CD8-positive, alpha-beta memory T cell (primary cell): ENCODE measurements at regions of chr22 and their contacts with region 1.

Region 1: DNA sequence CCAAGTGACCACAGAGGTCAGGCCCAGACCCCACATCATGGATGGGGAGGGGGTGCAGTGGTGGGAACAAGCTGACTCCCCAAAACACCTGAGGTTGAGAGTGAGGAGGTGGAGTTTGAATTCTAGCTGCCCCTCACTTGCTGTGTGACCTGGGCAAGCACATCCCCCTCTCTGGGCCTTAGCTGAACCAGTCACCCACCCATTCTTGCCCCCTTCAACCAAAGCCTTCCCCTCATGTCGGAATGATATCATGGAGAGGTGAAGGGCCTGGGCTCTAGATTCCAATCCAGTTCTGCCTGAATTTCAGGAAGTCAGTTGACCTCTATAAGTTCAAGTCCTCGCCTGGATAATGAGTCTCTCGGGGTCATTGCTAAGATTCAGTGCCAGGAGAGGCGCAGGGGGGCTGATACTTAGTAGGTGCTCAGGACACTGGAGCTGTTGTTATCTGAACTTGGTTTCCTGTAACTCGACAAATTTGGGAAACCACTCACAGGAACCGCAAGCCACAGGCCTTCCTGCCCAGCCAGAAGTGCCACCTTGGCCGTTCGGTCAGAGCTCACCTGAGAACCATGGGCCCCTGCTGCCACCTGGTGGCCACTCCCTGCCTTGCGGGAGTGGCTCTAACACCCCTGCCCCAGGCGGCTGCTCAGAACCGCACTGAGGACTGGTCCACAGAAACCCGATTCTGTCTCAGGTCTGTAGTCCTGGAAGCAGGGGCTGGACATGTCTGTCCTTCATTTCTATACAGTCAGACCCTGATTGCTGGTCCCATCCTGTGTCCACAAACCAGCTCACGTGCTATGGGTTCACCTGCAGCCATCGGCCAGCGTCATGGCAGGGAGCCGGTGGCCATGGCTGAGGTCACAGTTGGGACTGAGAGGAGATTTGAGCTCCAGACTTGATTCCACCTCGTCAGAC is 6.9 kb downstream of the CDC42EP1 start:
- DNase-seq: peak; percentile 82 to 92 (median 88)
- H3K4me3 ChIP-seq: peak overlapping the region; percentile 28
- H3K4me3 Mint-ChIP-seq: peak overlapping the region; percentile 55 to 88 (median 75)
- H3K27ac ChIP-seq: no peak overlapping the region
- H3K27ac Mint-ChIP-seq: peak overlapping the region in 6 of 8 donors; percentile 37 to 84 (median 78)
- H3K4me1 ChIP-seq: peaks cover 26% of the 10 kb centered on the region
- H3K4me1 Mint-ChIP-seq: peaks cover 19 to 29% (median 20%) of the 10 kb centered on the region in 3 donors
- H3K27me3 ChIP-seq: peaks cover 11% of the 10 kb centered on the region
- H3K27me3 Mint-ChIP-seq: peaks cover 28 to 32% of the 10 kb centered on the region in 2 donors

Region 2: DNA sequence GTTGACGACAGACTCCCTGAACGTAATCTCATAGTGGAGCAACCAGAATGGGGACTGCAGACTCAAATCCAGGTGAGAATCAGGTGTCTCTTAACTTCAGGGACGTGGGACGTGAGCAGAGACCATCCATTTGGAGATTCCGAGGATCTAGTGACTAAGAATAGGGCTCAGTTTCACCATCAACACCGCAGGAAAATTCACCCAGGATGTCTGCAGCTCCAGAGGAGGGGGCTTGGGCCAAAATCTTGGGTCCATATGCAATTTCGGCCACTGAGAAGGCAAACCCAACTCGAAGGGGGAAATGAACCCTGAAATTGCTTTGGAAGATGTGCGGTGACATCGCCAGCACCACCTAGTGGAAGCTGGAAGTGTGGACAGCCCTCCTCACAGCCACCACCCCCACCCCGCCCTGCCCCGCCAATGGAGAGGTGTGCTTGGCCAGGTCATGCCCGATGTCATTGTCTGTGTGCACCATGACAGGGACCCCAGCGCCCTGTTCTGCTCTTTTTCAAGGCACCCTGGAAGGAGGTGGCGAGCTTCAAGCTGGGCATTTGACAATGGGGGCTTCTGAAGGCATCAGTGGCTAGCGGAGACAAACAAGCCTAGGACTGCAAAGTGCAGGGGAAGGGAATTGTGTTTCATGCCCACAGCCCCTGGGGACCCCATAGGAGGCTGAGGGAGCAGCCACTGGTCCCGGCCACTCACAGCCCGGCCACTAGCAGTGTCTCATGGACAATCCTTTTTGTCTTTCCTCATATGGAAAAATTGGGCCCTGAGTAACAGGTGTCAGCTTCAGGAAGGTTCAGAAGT is 1289.5 kb before region 1 on chr22:
- CTCF ChIA-PET with region 1: no interaction called
- POLR2A ChIA-PET with region 1: interaction called, 11 read pairs
- DNase-seq: peak; percentile 45 to 76 (median 56)
- H3K4me3 ChIP-seq: no peak overlapping the region
- H3K4me3 Mint-ChIP-seq: peak overlapping the region in 1 of 7 donors; percentile 20
- H3K27ac ChIP-seq: no peak overlapping the region
- H3K27ac Mint-ChIP-seq: peak overlapping the region; percentile 28 to 91 (median 58)
- H3K4me1 ChIP-seq: peaks cover 14% of the 10 kb centered on the region
- H3K4me1 Mint-ChIP-seq: peaks cover 13 to 22% (median 18%) of the 10 kb centered on the region in 3 donors
- H3K27me3 ChIP-seq: no peaks in the 10 kb centered on the region
- H3K27me3 Mint-ChIP-seq: peaks cover 0 to 2% of the 10 kb centered on the region in 2 donors

Region 3: GRCh38 chr22:37472418-37473006 is 94.7 kb before region 1 on chr22:
- CTCF ChIA-PET with region 1: interaction called, 15 read pairs
- POLR2A ChIA-PET with region 1: no interaction called
- DNase-seq: peak; percentile 30 to 66 (median 37)
- H3K4me3 ChIP-seq: no peak overlapping the region
- H3K4me3 Mint-ChIP-seq: no peak overlapping the region
- H3K27ac ChIP-seq: no peak overlapping the region
- H3K27ac Mint-ChIP-seq: peak overlapping the region in 6 of 8 donors; percentile 17 to 87 (median 54)
- H3K4me1 ChIP-seq: no peaks in the 10 kb centered on the region
- H3K4me1 Mint-ChIP-seq: peaks cover 8 to 16% (median 10%) of the 10 kb centered on the region in 3 donors
- H3K27me3 ChIP-seq: no peaks in the 10 kb centered on the region
- H3K27me3 Mint-ChIP-seq: no peaks in the 10 kb centered on the region

Region 4: GRCh38 chr22:37538590-37539357 is 28.4 kb before region 1 on chr22:
- CTCF ChIA-PET with region 1: interaction called, 315 read pairs
- POLR2A ChIA-PET with region 1: interaction called, 3 read pairs
- DNase-seq: peak; percentile 82 to 89 (median 83)
- H3K4me3 ChIP-seq: no peak overlapping the region
- H3K4me3 Mint-ChIP-seq: peak overlapping the region in 5 of 7 donors; percentile 56 to 75 (median 65)
- H3K27ac ChIP-seq: no peak overlapping the region
- H3K27ac Mint-ChIP-seq: peak overlapping the region in 2 of 8 donors; percentile 45 to 87
- H3K4me1 ChIP-seq: peaks cover 12% of the 10 kb centered on the region
- H3K4me1 Mint-ChIP-seq: peaks cover 28 to 39% (median 33%) of the 10 kb centered on the region in 3 donors
- H3K27me3 ChIP-seq: no peaks in the 10 kb centered on the region
- H3K27me3 Mint-ChIP-seq: peaks cover 18 to 42% of the 10 kb centered on the region in 2 donors

Region 5: DNA sequence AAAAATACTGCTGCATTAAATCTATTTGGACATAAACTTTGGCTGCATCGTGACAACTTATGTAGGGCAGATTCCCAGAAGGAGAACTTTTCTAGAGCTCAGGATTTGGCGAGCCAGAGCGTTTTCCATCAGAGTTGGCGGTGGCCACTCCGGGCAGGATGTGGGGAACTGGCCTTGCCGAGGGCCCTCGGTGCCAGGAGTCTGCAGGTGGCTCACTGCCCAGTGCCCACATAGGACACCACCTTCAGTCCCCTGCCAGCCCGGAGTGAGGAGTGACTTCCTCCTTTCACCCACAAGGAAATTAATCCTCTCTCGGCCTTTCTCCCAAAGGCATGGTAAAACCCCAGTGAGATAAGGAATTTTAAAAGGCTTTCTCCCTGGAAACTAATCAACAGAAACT is 14.3 kb after region 1 on chr22:
- CTCF ChIA-PET with region 1: interaction called, 24 read pairs
- POLR2A ChIA-PET with region 1: interaction called, 8 read pairs
- DNase-seq: no peak
- H3K4me3 ChIP-seq: no peak overlapping the region
- H3K4me3 Mint-ChIP-seq: no peak overlapping the region
- H3K27ac ChIP-seq: no peak overlapping the region
- H3K27ac Mint-ChIP-seq: no peak overlapping the region
- H3K4me1 ChIP-seq: peaks cover 13% of the 10 kb centered on the region
- H3K4me1 Mint-ChIP-seq: peaks cover 5 to 19% (median 10%) of the 10 kb centered on the region in 3 donors
- H3K27me3 ChIP-seq: no peaks in the 10 kb centered on the region
- H3K27me3 Mint-ChIP-seq: peaks cover 15 to 17% of the 10 kb centered on the region in 2 donors

Region 6: GRCh38 chr22:37588546-37589215 is 21.5 kb after region 1 on chr22:
- CTCF ChIA-PET with region 1: interaction called, 68 read pairs
- POLR2A ChIA-PET with region 1: interaction called, 4 read pairs
- DNase-seq: no peak
- H3K4me3 ChIP-seq: no peak overlapping the region
- H3K4me3 Mint-ChIP-seq: no peak overlapping the region
- H3K27ac ChIP-seq: no peak overlapping the region
- H3K27ac Mint-ChIP-seq: no peak overlapping the region
- H3K4me1 ChIP-seq: peaks cover 6% of the 10 kb centered on the region
- H3K4me1 Mint-ChIP-seq: peaks cover 11 to 14% (median 13%) of the 10 kb centered on the region in 3 donors
- H3K27me3 ChIP-seq: no peaks in the 10 kb centered on the region
- H3K27me3 Mint-ChIP-seq: peaks cover 8 to 24% of the 10 kb centered on the region in 2 donors

Region 7: GRCh38 chr22:38056969-38057891 is 490.1 kb after region 1 on chr22 and contains the start of gene PICK1:
- CTCF ChIA-PET with region 1: no interaction called
- POLR2A ChIA-PET with region 1: no interaction called
- DNase-seq: peak; percentile 63 to 91 (median 82)
- H3K4me3 ChIP-seq: peak within 1 kb of the TSS; percentile 97
- H3K4me3 Mint-ChIP-seq: peak within 1 kb of the TSS; percentile 95 to 99 (median 97)
- H3K27ac ChIP-seq: peak within 1 kb of the TSS; percentile 77
- H3K27ac Mint-ChIP-seq: peak within 1 kb of the TSS; percentile 97 to 99 (median 99)
- H3K4me1 ChIP-seq: peaks cover 20% of the 10 kb centered on the region
- H3K4me1 Mint-ChIP-seq: peaks cover 20 to 28% (median 25%) of the 10 kb centered on the region in 3 donors
- H3K27me3 ChIP-seq: no peaks in the 10 kb centered on the region
- H3K27me3 Mint-ChIP-seq: no peaks in the 10 kb centered on the region
- total RNA-seq, gene PICK1: 21.0 to 22.5 TPM